Activated CD8-positive, alpha-beta T cell treated with anti-CD3 and anti-CD28 coated beads, Interleukin-2, amount 10 ng/mL, durations not matched to agents 7 days and 5 days (primary cell): ENCODE measurements at regions of chr2 and their contacts with region 1.

Region 1: DNA sequence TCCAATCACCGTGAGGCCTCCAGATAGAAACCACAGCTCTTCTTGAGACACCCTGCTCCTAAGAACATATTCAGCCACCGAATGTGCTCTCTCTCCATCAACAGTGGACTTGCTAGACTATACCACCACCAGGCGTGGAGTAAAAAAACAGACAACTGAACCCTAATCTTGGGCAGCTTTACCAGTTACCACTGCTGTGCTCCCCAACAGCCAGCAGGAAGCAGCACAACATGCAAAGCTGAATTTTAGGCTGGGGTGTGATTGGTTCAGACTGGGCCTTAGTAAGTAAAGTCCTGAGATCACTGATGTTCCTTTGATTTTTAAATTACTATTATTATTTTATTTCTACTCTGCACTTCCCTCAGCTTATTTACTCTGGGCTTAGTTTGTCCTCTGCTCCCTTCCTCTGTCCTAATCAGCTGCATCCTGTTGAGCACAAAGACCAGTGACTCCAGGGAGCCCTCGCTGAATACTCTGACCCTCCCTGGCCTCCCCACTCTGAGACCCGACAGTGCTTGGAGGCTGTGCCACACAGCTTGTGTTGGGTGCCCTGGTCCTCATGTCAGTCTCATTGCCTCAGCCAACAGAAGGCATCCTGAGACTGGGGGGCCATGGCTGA is 21.9 kb downstream of the MRPL35 start:
- DNase-seq: peak; percentile 77
- ATAC-seq: peak; percentile 68
- H3K4me3 Mint-ChIP-seq: no peak overlapping the region
- H3K27ac Mint-ChIP-seq: peak overlapping the region; percentile 39
- H3K4me1 Mint-ChIP-seq: peaks cover 46% of the 10 kb centered on the region
- H3K27me3 Mint-ChIP-seq: no peaks in the 10 kb centered on the region

Region 2: GRCh38 chr2:86072271-86072858 is 148.8 kb before region 1 on chr2:
- CTCF ChIA-PET with region 1: no interaction called
- POLR2A ChIA-PET with region 1: no interaction called
- DNase-seq: no peak
- ATAC-seq: no peak
- H3K4me3 Mint-ChIP-seq: no peak overlapping the region
- H3K27ac Mint-ChIP-seq: peak overlapping the region; percentile 72
- H3K4me1 Mint-ChIP-seq: peaks cover 47% of the 10 kb centered on the region
- H3K27me3 Mint-ChIP-seq: no peaks in the 10 kb centered on the region

Region 3: GRCh38 chr2:86185517-86186212 is 35.5 kb before region 1 on chr2:
- CTCF ChIA-PET with region 1: interaction called, 11 read pairs
- POLR2A ChIA-PET with region 1: no interaction called
- DNase-seq: no peak
- ATAC-seq: peak; percentile 69
- H3K4me3 Mint-ChIP-seq: peak overlapping the region; percentile 58
- H3K27ac Mint-ChIP-seq: peak overlapping the region; percentile 94
- H3K4me1 Mint-ChIP-seq: peaks cover 73% of the 10 kb centered on the region
- H3K27me3 Mint-ChIP-seq: no peaks in the 10 kb centered on the region

Region 4: GRCh38 chr2:86201671-86202335 is 19.4 kb before region 1 on chr2:
- CTCF ChIA-PET with region 1: interaction called, 13 read pairs
- POLR2A ChIA-PET with region 1: interaction called, 5 read pairs
- DNase-seq: no peak
- ATAC-seq: no peak
- H3K4me3 Mint-ChIP-seq: no peak overlapping the region
- H3K27ac Mint-ChIP-seq: no peak overlapping the region
- H3K4me1 Mint-ChIP-seq: peaks cover 37% of the 10 kb centered on the region
- H3K27me3 Mint-ChIP-seq: no peaks in the 10 kb centered on the region

Region 5: DNA sequence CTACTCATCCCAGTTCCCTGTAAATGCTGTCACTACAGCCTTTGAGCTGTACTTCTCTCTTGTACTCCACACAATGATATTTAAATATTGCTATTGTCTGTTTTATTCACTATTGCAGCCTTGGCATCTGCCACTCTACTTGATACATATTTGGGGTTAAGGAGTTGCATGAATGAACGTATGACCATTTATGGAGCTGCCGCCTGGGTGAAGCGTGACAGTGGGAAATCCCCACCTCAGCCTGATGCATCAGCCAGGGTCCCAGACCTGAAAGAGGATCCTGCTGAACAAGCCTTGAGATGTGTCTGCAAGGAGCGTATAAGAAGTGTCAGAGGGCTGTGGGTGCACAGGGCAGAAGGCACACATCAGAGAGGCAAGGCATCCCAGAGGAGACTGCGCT is 17.2 kb after region 1 on chr2:
- CTCF ChIA-PET with region 1: interaction called, 13 read pairs
- POLR2A ChIA-PET with region 1: no interaction called
- DNase-seq: peak; percentile 37
- ATAC-seq: peak; percentile 80
- H3K4me3 Mint-ChIP-seq: no peak overlapping the region
- H3K27ac Mint-ChIP-seq: no peak overlapping the region
- H3K4me1 Mint-ChIP-seq: peaks cover 18% of the 10 kb centered on the region
- H3K27me3 Mint-ChIP-seq: peaks cover 14% of the 10 kb centered on the region

Region 6: GRCh38 chr2:86293612-86294011 is 72.4 kb after region 1 on chr2:
- CTCF ChIA-PET with region 1: interaction called, 14 read pairs
- POLR2A ChIA-PET with region 1: no interaction called
- DNase-seq: no peak
- ATAC-seq: no peak
- H3K4me3 Mint-ChIP-seq: no peak overlapping the region
- H3K27ac Mint-ChIP-seq: no peak overlapping the region
- H3K4me1 Mint-ChIP-seq: no peaks in the 10 kb centered on the region
- H3K27me3 Mint-ChIP-seq: peaks cover 22% of the 10 kb centered on the region

Region 7: DNA sequence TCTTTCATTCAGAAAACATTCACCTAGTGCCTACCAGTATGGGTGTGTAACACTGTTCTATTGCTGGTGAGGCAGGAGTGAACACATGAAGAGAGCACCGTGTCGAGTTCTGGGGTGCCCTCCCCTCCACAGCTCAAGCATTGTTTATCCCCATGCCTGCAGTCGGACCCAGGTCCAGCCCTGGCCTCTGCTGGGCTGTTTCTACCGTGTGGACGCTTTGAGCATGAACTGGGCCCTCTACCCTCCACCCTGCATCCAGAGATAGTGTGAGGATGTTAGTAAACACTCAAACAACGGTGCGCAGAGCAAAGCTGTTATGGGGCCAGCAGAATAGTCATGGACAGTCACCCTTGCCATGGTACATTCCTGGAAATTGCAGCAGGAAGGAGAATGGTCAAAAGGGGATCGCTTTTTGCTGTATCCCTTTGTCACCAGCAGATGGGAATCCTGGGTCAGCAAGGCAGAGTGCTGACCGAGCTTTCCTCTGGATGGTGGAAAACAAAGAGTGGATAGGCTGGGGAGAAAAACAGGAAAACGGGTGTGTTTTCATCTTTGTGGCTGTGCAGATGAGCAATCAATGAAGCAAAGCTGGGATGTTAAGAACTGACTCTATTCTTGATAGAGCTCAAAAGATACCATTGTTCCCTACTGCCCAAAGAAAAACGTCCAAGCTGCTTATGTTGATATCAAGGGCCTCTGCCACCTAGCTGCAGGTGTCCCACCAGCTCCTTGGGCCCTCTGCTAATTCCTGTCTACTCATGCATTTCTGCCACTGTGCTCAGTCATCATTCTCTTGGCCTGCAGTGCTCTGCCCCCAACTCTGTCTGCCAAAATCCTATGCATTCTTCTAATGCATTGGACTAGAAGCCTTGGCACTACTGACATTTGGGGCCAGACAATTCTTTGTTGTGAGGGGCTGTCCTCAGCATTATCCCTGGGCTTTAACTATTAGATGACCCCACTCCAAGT is 77.5 kb after region 1 on chr2:
- CTCF ChIA-PET with region 1: interaction called, 14 read pairs
- POLR2A ChIA-PET with region 1: no interaction called
- DNase-seq: no peak
- ATAC-seq: no peak
- H3K4me3 Mint-ChIP-seq: no peak overlapping the region
- H3K27ac Mint-ChIP-seq: no peak overlapping the region
- H3K4me1 Mint-ChIP-seq: no peaks in the 10 kb centered on the region
- H3K27me3 Mint-ChIP-seq: peaks cover 23% of the 10 kb centered on the region

Region 8: GRCh38 chr2:86695053-86695691 is 474.0 kb after region 1 on chr2:
- CTCF ChIA-PET with region 1: no interaction called
- POLR2A ChIA-PET with region 1: no interaction called
- DNase-seq: no peak
- ATAC-seq: no peak
- H3K4me3 Mint-ChIP-seq: no peak overlapping the region
- H3K27ac Mint-ChIP-seq: no peak overlapping the region
- H3K4me1 Mint-ChIP-seq: peaks cover 8% of the 10 kb centered on the region
- H3K27me3 Mint-ChIP-seq: no peaks in the 10 kb centered on the region